Esophagus muscularis mucosa (tissue), 4 donors: ENCODE measurements at regions of chr6 and their contacts with region 1.

Region 1: GRCh38 chr6:165850434-165851019 is 187.5 kb upstream of the PDE10A start:
- DNase-seq: peak; percentile 94
- H3K4me3 ChIP-seq: peak overlapping the region in 3 of 4 donors; percentile 3 to 9 (median 7)
- H3K27ac ChIP-seq: no peak overlapping the region
- H3K4me1 ChIP-seq: peaks cover 8 to 16% (median 13%) of the 10 kb centered on the region in 4 donors
- H3K27me3 ChIP-seq: peaks cover 0 to 39% (median 16%) of the 10 kb centered on the region in 4 donors
- CTCF ChIP-seq: peak in 2 of 3 experiments; percentile 94 to 96
- EP300 ChIP-seq: no peak
- POLR2A ChIP-seq: no peak

Region 2: GRCh38 chr6:165345700-165346099 is 504.8 kb before region 1 on chr6:
- intact Hi-C with region 1: no loop called
- DNase-seq: no peak
- H3K4me3 ChIP-seq: no peak overlapping the region
- H3K27ac ChIP-seq: no peak overlapping the region
- H3K4me1 ChIP-seq: no peaks in the 10 kb centered on the region
- H3K27me3 ChIP-seq: no peaks in the 10 kb centered on the region
- CTCF ChIP-seq: no peak
- EP300 ChIP-seq: no peak
- POLR2A ChIP-seq: no peak

Region 3: GRCh38 chr6:165439928-165440554 is 410.5 kb before region 1 on chr6:
- intact Hi-C with region 1: loop called (anchors 5 kb)
- DNase-seq: no peak
- H3K4me3 ChIP-seq: no peak overlapping the region
- H3K27ac ChIP-seq: no peak overlapping the region
- H3K4me1 ChIP-seq: no peaks in the 10 kb centered on the region
- H3K27me3 ChIP-seq: no peaks in the 10 kb centered on the region
- CTCF ChIP-seq: peak; percentile 17 to 52 (median 47)
- EP300 ChIP-seq: no peak
- POLR2A ChIP-seq: no peak

Region 4: GRCh38 chr6:165774903-165775601 is 75.5 kb before region 1 on chr6:
- intact Hi-C with region 1: no loop called
- DNase-seq: peak; percentile 90
- H3K4me3 ChIP-seq: no peak overlapping the region
- H3K27ac ChIP-seq: no peak overlapping the region
- H3K4me1 ChIP-seq: peaks cover 0 to 8% (median 5%) of the 10 kb centered on the region in 4 donors
- H3K27me3 ChIP-seq: no peaks in the 10 kb centered on the region
- CTCF ChIP-seq: no peak
- EP300 ChIP-seq: no peak
- POLR2A ChIP-seq: no peak